Dorsolateral prefrontal cortex (tissue), 120 donors: ENCODE measurements at regions of chr19 and their contacts with region 1.

Region 1: GRCh38 chr19:10194500-10195289 is at the start of gene DNMT1:
- DNase-seq: peak; percentile 93 to 98 (median 96)
- H3K4me3 ChIP-seq: peak within 1 kb of the TSS; percentile 64 to 96 (median 88)
- H3K27ac ChIP-seq: peak within 1 kb of the TSS; percentile 66 to 98 (median 92)
- H3K27me3 ChIP-seq: no peaks in the 10 kb centered on the region
- CTCF ChIP-seq: peak in 29 of 56 donors; percentile 3 to 50 (median 16)
- total RNA-seq, gene DNMT1: 44.4 to 105 (median 67.2) TPM

Region 2: GRCh38 chr19:10173257-10173926 is 21.3 kb before region 1 on chr19:
- intact Hi-C with region 1: loop called in 1 of 2 experiments (anchors 1 kb)
- DNase-seq: no peak
- H3K4me3 ChIP-seq: no peak overlapping the region
- H3K27ac ChIP-seq: no peak overlapping the region
- H3K27me3 ChIP-seq: no peaks in the 10 kb centered on the region
- CTCF ChIP-seq: no peak

Region 3: DNA sequence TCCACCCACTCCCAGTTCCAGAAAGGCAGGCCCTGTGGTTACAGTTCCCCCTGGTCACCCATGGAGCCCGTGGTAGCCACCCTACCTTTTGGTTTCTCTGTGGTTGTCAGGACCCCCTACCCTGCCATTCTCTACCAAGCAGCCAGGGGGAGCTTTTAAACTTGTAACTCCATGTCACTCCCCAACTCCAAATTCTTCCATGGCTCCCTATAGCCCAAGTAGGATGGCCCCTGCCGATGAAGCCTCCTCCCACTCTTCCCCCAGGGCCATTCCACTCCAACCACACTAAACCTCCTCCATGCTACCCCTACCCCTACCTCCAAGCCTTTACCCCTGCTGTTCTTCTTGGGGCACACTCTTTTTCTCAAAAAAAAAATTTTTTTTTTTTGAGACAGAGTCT is 34.2 kb after region 1 on chr19:
- intact Hi-C with region 1: loop called (anchors 1 to 2 kb)
- DNase-seq: no peak
- H3K4me3 ChIP-seq: no peak overlapping the region
- H3K27ac ChIP-seq: peak overlapping the region in 22 of 59 donors; percentile 3 to 97 (median 58)
- H3K27me3 ChIP-seq: no peaks in the 10 kb centered on the region
- CTCF ChIP-seq: peak in 54 of 56 donors; percentile 27 to 68 (median 50)